Activated T-helper 1 cell treated with anti-CD3 and anti-CD28 coated beads, Interleukin-12 subunit alpha, Interleukin-12 subunit beta, Interleukin-2, Interleukin-4 antibody, amounts not matched to agents 30 ng/mL and 10 ng/mL and 1 ng/mL, durations not matched to agents 14 hours and 24 hours and 36 hours (primary cell): ENCODE measurements at regions of chr4 and their contacts with region 1.

Region 1: GRCh38 chr4:105471566-105472176 is 2.2 kb downstream of the PPA2 start:
- DNase-seq: peak; percentile 64
- H3K4me3 Mint-ChIP-seq: peak overlapping the region; percentile 78
- H3K27ac Mint-ChIP-seq: no peak overlapping the region
- H3K4me1 Mint-ChIP-seq: peaks cover 49% of the 10 kb centered on the region
- H3K27me3 Mint-ChIP-seq: peaks cover 2% of the 10 kb centered on the region

Region 2: DNA sequence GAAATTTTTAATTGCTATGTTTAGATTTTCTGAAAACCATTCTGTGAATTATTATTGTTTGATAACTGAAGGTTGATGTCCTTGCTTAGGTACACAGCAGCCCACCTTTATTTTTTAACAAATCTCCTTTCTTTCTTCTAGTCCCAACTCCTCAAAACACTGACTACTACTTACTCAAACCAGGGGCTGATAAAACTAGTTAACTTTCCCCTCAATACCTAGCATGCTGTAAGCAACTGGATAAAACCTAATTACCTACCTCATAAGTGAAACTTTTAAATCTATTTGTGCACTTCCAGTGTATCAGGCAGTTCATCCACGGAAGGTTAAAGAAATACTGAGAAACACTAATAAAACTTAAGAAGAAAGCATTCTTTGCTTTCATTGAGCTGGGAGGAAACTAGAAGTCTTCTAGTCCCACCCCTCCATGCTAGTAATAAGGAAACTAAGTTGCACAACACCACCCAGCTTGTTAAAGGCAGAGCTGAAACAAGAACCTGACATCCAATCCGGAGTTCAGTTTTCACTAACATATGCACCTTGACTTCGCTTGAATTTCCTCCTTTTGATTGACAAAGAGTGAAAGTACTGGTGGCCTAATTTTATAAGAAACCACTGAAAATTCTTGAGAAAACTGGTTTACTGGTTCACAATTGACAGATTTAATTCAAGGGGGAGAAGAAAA is 505.2 kb before region 1 on chr4:
- intact Hi-C with region 1: loop called (anchors 1 kb)
- DNase-seq: peak; percentile 42
- H3K4me3 Mint-ChIP-seq: peak overlapping the region; percentile 63
- H3K27ac Mint-ChIP-seq: peak overlapping the region; percentile 91
- H3K4me1 Mint-ChIP-seq: peaks cover 17% of the 10 kb centered on the region
- H3K27me3 Mint-ChIP-seq: peaks cover 5% of the 10 kb centered on the region

Region 3: DNA sequence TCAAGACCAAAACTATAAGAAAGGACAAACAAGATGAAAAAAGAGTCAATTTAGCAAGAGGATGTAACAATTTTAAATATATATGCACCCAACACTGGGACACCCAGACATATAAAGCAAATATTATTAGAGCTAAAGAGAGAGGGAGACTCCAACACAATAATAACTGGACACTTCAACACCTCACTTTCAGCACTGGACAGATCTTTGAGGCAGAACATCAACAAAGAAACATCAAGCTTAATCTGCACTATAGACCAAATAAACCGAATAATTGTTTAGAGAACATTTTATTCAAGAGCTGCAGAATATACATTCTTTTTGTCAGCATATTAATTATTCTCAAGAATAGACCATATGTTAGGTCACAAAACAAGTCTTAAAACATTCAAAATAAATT is 434.7 kb before region 1 on chr4:
- intact Hi-C with region 1: no loop called
- DNase-seq: no peak
- H3K4me3 Mint-ChIP-seq: no peak overlapping the region
- H3K27ac Mint-ChIP-seq: no peak overlapping the region
- H3K4me1 Mint-ChIP-seq: no peaks in the 10 kb centered on the region
- H3K27me3 Mint-ChIP-seq: peaks cover 4% of the 10 kb centered on the region

Region 4: GRCh38 chr4:105146276-105147015 is 325.2 kb before region 1 on chr4 and contains the start of gene TET2:
- intact Hi-C with region 1: loop called (anchors 1 kb)
- DNase-seq: peak; percentile 77
- H3K4me3 Mint-ChIP-seq: peak within 1 kb of the TSS; percentile 95
- H3K27ac Mint-ChIP-seq: peak within 1 kb of the TSS; percentile 98
- H3K4me1 Mint-ChIP-seq: peaks cover 50% of the 10 kb centered on the region
- H3K27me3 Mint-ChIP-seq: no peaks in the 10 kb centered on the region
- total RNA-seq, gene TET2: 28.7 and 28.8 TPM in 2 replicates

Region 5: GRCh38 chr4:105257826-105258495 is 213.7 kb before region 1 on chr4:
- intact Hi-C with region 1: loop called (anchors 5 kb)
- DNase-seq: no peak
- H3K4me3 Mint-ChIP-seq: no peak overlapping the region
- H3K27ac Mint-ChIP-seq: no peak overlapping the region
- H3K4me1 Mint-ChIP-seq: peaks cover 4% of the 10 kb centered on the region
- H3K27me3 Mint-ChIP-seq: no peaks in the 10 kb centered on the region

Region 6: DNA sequence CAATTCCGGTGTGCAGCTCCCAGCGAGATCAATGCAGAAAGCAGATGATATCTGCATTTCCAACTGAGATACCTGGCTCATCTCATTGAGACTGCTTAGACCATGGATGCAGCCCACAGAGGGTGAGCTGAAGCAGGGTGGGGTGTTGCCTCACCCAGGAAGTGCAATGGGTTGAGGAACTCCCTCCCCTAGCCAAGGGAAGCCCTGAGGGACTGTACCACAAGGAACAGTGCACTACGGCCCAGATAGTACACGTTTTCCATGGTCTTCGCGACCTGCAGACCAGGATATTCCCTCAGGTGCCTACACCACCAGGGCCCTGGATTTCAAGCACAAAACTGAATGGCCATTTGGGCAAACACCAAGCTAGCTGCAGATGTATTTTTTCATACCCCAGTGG is 175.0 kb before region 1 on chr4:
- intact Hi-C with region 1: no loop called
- DNase-seq: no peak
- H3K4me3 Mint-ChIP-seq: no peak overlapping the region
- H3K27ac Mint-ChIP-seq: no peak overlapping the region
- H3K4me1 Mint-ChIP-seq: no peaks in the 10 kb centered on the region
- H3K27me3 Mint-ChIP-seq: no peaks in the 10 kb centered on the region

Region 7: GRCh38 chr4:105352826-105353225 is 118.8 kb before region 1 on chr4:
- intact Hi-C with region 1: no loop called
- DNase-seq: no peak
- H3K4me3 Mint-ChIP-seq: peak overlapping the region; percentile 6
- H3K27ac Mint-ChIP-seq: no peak overlapping the region
- H3K4me1 Mint-ChIP-seq: peaks cover 14% of the 10 kb centered on the region
- H3K27me3 Mint-ChIP-seq: no peaks in the 10 kb centered on the region

Region 8: GRCh38 chr4:105551965-105552746 is 80.5 kb after region 1 on chr4 and contains the start of gene ARHGEF38:
- intact Hi-C with region 1: no loop called
- DNase-seq: no peak
- H3K4me3 Mint-ChIP-seq: no peak within 1 kb of the TSS
- H3K27ac Mint-ChIP-seq: no peak within 1 kb of the TSS
- H3K4me1 Mint-ChIP-seq: no peaks in the 10 kb centered on the region
- H3K27me3 Mint-ChIP-seq: peaks cover 8% of the 10 kb centered on the region
- total RNA-seq, gene ARHGEF38: not detected in 2 replicates

Region 9: DNA sequence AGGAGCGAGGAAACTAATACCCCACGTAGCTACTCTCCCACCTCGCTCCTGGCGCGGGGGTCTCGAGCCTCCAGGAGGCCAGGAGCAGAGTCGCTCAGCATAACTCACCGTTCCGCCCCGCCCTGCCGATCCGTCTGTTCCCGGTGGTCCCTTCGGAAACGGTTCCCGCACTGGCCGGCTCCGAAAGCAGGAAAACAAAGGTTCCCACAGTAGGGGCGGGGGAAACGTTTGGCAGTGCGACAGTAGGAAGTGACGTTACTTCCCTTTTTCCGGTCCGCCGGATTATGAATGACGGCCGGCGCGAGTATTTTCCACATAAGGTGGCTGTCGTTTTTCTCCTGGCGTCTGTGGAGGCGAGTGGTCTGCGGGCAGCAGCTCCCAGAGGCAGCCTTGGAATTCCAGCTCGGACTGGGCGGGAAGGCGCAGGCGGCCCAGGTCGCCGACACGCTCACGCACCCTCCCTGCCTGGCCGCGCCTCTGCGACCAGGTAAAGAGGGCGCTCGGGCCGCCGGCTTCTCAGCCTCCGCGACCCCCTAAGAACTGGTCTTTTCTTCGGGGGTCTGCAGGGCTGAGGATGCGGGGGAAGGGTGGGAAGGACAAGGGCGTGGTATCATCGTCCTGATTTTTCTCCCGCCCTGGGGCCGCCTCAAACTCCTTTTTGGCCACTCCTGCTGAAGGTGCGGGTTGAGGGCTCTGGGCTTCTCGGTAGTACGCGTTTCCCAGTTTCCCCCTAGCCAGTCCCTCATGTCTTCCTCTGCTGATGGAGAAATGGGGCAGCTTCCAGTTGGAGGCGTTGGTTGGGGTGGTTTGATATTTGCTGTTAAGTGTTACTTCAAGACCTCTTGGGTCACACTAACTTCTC is 237.1 kb after region 1 on chr4 and contains the starts of genes GSTCD and INTS12:
- intact Hi-C with region 1: loop called (anchors 1 kb)
- DNase-seq: peak; percentile 83
- H3K4me3 Mint-ChIP-seq: peak within 1 kb of the TSS; percentile 99
- H3K27ac Mint-ChIP-seq: peak within 1 kb of the TSS; percentile 95
- H3K4me1 Mint-ChIP-seq: peaks cover 21% of the 10 kb centered on the region
- H3K27me3 Mint-ChIP-seq: no peaks in the 10 kb centered on the region
- total RNA-seq, gene GSTCD: 17.0 and 20.9 TPM in 2 replicates
- total RNA-seq, gene INTS12: 18.7 and 22.4 TPM in 2 replicates